Ascending aorta (tissue), 2 donors: ENCODE measurements at regions of chr3 and their contacts with region 1.

Region 1: GRCh38 chr3:97793420-97794019 is 28.3 kb upstream of the CRYBG3 start:
- DNase-seq: no peak
- H3K4me3 ChIP-seq: no peak overlapping the region
- H3K27ac ChIP-seq: no peak overlapping the region
- H3K4me1 ChIP-seq: no peaks in the 10 kb centered on the region
- H3K27me3 ChIP-seq: no peaks in the 10 kb centered on the region
- CTCF ChIP-seq: peak; percentile 59 to 75 (median 69)

Region 2: DNA sequence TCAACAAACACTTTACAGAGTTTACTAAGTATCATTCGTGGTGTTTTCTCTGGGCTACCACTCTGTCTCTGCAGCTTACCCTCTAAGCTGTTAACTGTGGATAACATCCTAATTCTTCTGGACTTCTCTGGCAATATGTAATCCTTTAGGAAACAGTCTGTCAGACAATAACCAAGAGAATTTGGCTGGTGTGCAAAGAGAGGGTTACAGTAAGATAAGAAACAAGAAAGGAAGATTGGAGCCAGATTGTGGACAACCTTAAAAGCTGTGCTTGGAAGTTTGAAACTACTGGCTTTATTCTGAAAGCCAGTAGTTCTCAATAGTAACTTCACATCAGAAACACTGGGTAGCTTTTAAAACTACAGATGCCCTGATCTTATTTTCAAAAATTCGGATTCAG is 28.2 kb before region 1 on chr3:
- intact Hi-C with region 1: no loop called
- DNase-seq: no peak
- H3K4me3 ChIP-seq: peak overlapping the region; percentile 72 to 86
- H3K27ac ChIP-seq: no peak overlapping the region
- H3K4me1 ChIP-seq: peaks cover 0 to 5% of the 10 kb centered on the region in 2 donors
- H3K27me3 ChIP-seq: no peaks in the 10 kb centered on the region
- CTCF ChIP-seq: no peak

Region 3: DNA sequence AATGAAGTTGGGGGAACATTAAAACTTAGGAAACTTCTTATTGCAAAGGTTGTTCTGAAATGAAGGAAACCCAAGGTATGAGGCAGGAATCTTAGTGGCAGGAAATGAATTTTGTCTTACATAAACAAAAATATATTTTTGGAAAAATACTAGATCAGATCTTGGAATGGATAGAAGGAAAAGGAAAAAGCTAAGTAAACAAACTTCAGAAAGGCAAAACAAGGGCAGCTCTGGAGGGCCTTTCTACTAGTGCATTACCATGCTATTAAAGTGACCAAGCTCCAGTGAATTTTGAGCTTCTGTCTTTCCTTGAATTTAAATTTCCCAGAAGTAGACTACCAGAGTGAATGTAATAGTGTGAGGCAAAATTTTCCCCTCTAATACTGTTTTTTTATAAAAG is 15.4 kb before region 1 on chr3:
- intact Hi-C with region 1: no loop called
- DNase-seq: no peak
- H3K4me3 ChIP-seq: no peak overlapping the region
- H3K27ac ChIP-seq: no peak overlapping the region
- H3K4me1 ChIP-seq: no peaks in the 10 kb centered on the region
- H3K27me3 ChIP-seq: no peaks in the 10 kb centered on the region
- CTCF ChIP-seq: no peak

Region 4: DNA sequence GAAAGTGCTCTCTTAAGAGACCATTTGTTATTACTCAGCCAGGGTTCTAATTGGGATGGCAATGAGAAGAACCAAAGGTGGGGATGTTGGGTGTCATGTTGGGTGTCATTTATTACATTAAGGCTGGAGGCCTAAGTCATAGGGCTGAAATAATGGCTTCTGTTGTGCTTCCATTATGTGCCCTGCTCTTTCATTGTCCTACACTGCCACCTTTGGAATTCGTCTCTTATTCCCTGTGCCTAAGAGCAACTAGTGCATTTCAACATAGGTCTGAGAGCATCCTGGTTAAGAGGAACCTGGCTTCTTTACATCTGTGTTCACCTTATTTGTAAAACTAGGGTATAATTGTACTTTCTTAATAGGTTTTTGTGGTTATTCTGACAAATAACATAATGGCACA is 146.5 kb after region 1 on chr3:
- intact Hi-C with region 1: loop called (anchors 10 kb)
- DNase-seq: no peak
- H3K4me3 ChIP-seq: no peak overlapping the region
- H3K27ac ChIP-seq: no peak overlapping the region
- H3K4me1 ChIP-seq: peaks cover 0 to 2% of the 10 kb centered on the region in 2 donors
- H3K27me3 ChIP-seq: no peaks in the 10 kb centered on the region
- CTCF ChIP-seq: no peak

Region 5: DNA sequence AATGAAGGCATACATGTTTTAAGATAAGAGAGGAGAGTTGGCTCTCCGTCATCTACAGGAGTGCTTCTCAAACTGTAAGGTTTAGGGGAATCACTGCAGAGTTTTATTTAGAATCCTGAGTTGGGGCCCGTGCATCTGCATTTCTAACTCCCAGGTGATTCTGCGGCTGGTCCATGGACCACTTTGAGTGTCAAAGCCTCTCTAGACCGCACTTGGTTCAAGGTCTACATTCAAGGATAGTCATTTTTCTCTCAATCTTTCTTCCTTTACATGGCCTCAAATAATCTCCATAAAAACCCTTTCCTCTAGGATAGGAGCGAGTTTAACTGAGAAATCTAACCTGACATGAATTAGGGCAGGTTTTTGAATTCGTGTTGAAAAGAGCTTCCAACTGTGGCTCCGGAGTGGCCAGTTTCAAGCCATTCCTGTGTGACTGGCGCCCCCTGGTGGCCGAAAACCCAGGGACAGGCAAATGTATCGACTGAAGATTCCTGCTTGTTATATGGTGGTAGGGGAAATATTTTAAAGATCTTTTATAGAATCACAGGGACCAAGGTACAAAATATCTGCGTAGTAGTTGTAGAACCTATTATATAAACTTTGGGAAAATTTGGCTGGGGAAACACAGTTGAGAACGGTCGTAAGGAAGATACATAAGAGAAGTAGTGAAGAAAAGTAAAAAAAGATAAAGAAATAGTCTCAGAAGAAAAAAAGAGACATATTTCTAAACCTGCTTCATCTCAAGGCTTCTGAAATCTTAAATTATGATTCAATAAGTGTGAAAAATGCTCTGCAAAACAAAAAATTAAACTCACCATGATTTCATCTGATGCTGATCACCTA is 229.7 kb after region 1 on chr3:
- intact Hi-C with region 1: loop called (anchors 1 kb)
- DNase-seq: peak; percentile 30 to 93
- H3K4me3 ChIP-seq: no peak overlapping the region
- H3K27ac ChIP-seq: no peak overlapping the region
- H3K4me1 ChIP-seq: no peaks in the 10 kb centered on the region
- H3K27me3 ChIP-seq: no peaks in the 10 kb centered on the region
- CTCF ChIP-seq: peak; percentile 83 to 98 (median 87)